ENCODE measurements at regions of chr11 and their contacts with region 1.

Region 1: DNA sequence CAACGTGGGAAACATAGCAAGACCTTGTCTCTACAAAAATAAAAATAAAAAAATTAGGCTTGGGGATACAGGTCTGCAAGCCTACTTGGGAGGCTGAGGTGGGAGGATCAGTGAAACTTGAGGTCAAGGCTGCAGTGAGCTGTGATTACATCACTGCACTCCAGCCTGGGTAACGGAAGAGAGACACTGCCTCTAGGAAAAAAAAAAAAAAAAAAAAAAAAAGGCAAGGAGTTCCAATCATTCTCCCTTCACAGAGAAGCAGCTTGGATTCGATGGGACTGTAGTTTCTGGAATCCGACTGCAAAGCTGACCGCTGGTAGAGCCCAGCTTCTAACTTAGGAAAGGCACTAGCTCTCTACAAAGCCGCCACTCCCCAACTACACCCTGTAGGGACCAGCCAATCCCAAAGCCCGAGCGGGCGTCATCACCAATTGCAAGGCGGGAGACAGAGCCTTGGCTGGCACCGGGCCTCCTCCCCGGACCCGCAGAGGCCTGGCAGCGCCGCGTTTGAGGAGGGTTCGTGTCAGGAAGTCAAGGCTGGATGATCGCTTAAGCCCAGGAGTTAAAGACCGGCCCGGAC is 699 bp upstream of the DDB2 start:
- DNase-seq: peak; percentile 80 to 98
- H3K4me3 ChIP-seq: peak overlapping the region; percentile 61 to 72
- H3K27ac ChIP-seq: peak overlapping the region; percentile 95 to 97
- H3K4me1 ChIP-seq: peaks cover 7 to 18% of the 10 kb centered on the region in 2 donors
- H3K27me3 ChIP-seq: no peaks in the 10 kb centered on the region
- CTCF ChIP-seq: no peak

Region 2: DNA sequence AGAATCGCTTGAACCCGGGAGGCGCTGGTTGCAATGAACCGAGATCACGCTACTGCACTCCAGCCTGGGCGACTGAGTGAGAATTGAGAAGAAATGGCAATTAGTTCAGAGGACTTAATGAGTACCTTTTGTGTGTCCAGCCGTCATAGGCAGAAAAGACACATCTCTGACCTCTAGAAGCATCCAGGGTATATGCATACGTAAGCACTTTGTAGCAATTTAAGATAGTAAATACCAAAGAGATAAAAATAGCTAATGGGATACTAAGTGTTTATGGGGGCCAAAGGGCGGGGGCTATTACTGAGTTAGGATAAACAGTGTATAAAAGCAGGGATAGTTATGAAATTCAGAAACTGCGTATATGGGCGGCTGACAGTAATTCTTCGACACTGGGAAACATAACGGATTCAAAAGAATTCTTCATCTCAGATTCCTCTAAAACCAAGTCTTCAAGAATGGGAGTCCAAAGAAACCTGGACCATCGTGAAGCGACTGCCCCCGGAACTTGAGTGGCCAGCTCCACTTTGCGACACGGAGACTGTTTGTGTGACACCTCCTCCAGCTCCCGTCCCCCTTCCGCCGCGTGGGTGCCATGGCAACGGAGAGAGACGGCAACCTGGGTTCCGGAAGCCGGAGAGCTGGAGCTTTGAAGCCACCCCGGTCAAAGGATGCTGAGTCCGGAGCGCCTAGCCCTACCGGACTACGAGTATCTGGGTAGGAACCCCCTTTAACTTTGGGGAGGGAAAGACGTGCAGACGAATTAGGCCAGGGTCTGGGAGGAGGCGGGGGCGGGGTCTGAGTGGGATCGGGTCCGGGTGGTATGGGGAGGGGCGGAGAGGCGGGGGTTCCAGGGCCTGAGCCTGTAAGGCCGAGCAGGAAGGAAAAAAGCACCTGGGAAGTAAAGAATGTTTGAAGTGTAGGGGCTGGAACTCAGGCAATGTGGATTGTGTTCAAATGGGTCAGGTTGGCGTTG is 277.7 kb before region 1 on chr11 and contains the start of gene CSTPP1:
- intact Hi-C with region 1: loop called (anchors 2 kb)
- DNase-seq: peak; percentile 75 to 95
- H3K4me3 ChIP-seq: peak within 1 kb of the TSS; percentile 71 to 91
- H3K27ac ChIP-seq: peak within 1 kb of the TSS in 1 of 2 donors; percentile 44
- H3K4me1 ChIP-seq: peaks cover 0 to 6% of the 10 kb centered on the region in 2 donors
- H3K27me3 ChIP-seq: no peaks in the 10 kb centered on the region
- CTCF ChIP-seq: no peak
- total RNA-seq, gene CSTPP1: 16.6 TPM

Region 3: GRCh38 chr11:47176328-47177228 is 37.5 kb before region 1 on chr11 and contains the start of gene ARFGAP2:
- intact Hi-C with region 1: loop called (anchors 1 kb)
- DNase-seq: peak; percentile 89 to 98
- H3K4me3 ChIP-seq: peak within 1 kb of the TSS; percentile 98 to 99
- H3K27ac ChIP-seq: peak within 1 kb of the TSS; percentile 98 to 99
- H3K4me1 ChIP-seq: peaks cover 15 to 33% of the 10 kb centered on the region in 2 donors
- H3K27me3 ChIP-seq: no peaks in the 10 kb centered on the region
- CTCF ChIP-seq: no peak
- total RNA-seq, gene ARFGAP2: 66.1 TPM

Region 4: DNA sequence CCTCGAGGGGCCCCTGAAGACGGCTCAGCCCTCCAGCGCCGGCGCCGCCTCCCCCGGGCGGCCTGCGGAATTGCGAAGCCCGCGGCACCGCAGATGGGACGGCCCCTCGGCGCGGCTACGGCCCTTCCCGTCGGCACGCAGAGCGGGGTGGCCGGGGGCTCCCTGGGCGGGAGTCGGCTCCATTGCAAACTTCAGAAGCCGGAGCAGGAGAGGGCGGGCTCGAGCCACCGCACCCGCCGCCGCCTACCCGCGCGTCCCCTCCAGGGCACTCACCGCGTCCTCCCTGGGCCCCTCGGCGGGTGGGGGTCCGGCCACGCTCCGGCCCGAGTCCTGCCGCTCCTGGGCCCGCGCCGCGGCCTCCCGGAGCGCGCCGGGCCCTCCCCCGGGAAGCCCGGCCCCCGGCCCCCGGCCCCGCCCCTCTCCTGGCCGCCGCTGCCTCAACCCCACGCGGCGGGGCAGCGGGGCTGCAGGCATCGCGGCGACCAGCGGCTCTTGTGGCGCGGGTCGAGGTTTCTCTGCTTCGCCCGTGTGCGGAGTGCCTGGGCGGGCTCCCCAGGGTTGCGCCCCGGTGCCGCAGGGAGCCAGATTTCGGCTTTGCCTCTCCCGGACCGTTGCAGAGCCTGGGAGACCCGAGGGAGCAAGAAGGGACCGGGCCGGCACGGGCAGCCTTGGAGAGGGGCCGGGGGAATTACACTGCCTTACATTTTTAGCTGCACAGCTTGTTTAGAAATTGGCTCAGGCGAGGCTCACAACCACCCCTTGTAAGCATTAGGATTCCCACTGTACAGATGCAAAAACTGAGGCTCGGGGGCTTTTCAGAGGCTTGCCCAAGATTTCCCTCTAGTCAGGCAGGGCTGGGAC is 27.8 kb before region 1 on chr11 and contains the start of gene PACSIN3:
- intact Hi-C with region 1: loop called (anchors 1 kb)
- DNase-seq: no peak
- H3K4me3 ChIP-seq: peak within 1 kb of the TSS; percentile 72 to 87
- H3K27ac ChIP-seq: peak within 1 kb of the TSS; percentile 93 to 95
- H3K4me1 ChIP-seq: peaks cover 4 to 31% of the 10 kb centered on the region in 2 donors
- H3K27me3 ChIP-seq: no peaks in the 10 kb centered on the region
- CTCF ChIP-seq: peak in 1 of 3 experiments; percentile 18
- total RNA-seq, gene PACSIN3: 32.7 TPM

Region 5: GRCh38 chr11:47248664-47249377 is 34.7 kb after region 1 on chr11 and contains the start of gene ACP2:
- intact Hi-C with region 1: loop called (anchors 2 kb)
- DNase-seq: peak; percentile 62 to 94
- H3K4me3 ChIP-seq: peak within 1 kb of the TSS; percentile 81 to 96
- H3K27ac ChIP-seq: peak within 1 kb of the TSS; percentile 76 to 82
- H3K4me1 ChIP-seq: peaks cover 0 to 18% of the 10 kb centered on the region in 2 donors
- H3K27me3 ChIP-seq: no peaks in the 10 kb centered on the region
- CTCF ChIP-seq: peak in 2 of 3 experiments; percentile 15 to 26
- total RNA-seq, gene ACP2: 63.3 TPM

Region 6: DNA sequence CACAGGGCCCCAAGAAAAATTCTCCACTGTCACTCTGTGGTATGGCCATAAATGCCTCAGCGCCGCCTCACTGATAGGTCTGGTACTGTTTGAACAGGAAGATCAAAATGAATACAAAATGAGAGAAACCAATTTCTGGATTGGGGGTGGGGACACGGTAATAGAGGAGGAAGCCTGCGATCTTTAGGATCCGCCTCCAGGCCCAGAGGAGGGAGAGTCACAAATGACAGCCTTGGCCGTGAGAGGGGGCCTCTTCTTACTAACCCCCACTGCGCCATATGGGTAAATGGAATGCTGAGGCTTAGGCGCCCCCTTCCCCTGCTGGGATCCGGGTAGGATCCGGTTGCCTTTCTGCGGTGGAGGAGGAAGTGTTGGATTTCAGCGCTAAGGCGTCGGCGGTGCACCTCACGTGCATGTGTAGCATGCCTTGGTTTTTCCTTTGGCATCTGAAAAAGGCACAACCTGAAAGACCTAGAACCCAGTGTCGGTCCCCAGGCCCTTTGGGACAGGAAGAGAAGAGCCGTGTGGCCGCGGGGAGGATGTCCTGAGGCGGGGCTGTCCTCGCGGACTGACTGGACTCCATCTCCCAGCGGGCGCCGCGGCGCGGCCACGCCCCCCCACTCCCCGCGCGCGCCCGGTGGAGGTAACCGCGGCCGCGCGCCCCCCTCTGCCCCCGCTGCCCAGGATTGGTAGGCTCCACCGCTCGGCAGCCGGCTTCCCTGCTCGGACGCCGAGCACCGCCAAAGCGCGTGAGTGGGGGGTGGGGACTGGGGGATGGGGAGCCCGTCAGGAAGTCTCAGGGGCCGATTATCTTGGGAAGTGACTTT is 55.1 kb after region 1 on chr11:
- intact Hi-C with region 1: loop called (anchors 1 kb)
- DNase-seq: peak; percentile 67 to 94
- H3K4me3 ChIP-seq: peak overlapping the region; percentile 81 to 90
- H3K27ac ChIP-seq: peak overlapping the region; percentile 86 to 95
- H3K4me1 ChIP-seq: peaks cover 10 to 19% of the 10 kb centered on the region in 2 donors
- H3K27me3 ChIP-seq: no peaks in the 10 kb centered on the region
- CTCF ChIP-seq: peak in 2 of 3 experiments; percentile 12 to 15

Measured in ascending aorta (tissue), 2 donors.